Activated CD8-positive, alpha-beta T cell treated with anti-CD3 and anti-CD28 coated beads for 36 hours (primary cell): ENCODE measurements at regions of chr20 and their contacts with region 1.

Region 1: DNA sequence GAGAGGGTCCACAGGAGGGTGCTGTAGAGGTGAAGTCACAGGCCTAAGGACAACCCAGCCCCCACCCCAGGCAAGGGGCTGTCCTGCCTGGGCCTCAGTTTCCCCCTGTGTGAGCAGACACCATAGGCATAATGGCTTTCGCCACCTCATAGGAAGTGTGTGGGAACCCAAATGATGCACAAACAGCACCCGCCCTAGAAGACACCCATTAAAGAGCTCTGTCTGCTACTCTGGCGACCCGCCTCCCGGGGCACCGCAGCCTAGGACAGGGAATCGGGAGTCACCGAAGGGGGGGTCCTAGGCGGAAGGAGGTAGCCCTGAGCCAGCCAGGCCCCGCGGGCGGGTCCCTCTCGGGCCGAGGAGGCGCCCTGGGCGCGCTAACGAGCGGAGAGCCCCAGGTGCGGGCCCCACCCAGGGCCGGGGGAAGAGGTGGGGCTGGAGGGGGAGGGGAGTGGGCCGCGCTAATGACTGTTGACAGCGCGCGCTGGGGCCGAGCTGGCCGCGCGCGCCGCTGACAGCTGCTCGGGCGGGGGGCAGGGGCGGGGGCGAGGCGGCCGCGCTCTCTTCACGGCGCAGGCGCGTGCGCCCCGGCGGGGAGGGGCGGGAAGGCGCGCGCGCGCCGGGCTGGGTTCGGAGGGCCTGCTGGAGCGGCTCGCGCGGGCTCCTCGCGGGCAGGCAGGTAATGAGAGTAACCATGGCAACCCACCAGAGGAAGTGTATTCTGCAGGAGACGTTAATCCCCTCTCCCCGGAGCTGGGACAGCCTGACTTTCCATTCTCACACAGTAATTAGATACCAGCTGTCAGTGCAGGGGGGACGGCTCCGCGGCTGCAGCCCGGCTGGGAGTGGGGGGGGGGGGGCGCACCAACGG is 48.9 kb downstream of the NOL4L start:
- DNase-seq: peak; percentile 85
- ATAC-seq: peak; percentile 40
- H3K4me3 Mint-ChIP-seq: peak overlapping the region; percentile 67
- H3K27ac Mint-ChIP-seq: peak overlapping the region; percentile 90
- H3K4me1 Mint-ChIP-seq: peaks cover 81% of the 10 kb centered on the region
- H3K27me3 Mint-ChIP-seq: no peaks in the 10 kb centered on the region
- CTCF ChIP-seq: no peak

Region 2: DNA sequence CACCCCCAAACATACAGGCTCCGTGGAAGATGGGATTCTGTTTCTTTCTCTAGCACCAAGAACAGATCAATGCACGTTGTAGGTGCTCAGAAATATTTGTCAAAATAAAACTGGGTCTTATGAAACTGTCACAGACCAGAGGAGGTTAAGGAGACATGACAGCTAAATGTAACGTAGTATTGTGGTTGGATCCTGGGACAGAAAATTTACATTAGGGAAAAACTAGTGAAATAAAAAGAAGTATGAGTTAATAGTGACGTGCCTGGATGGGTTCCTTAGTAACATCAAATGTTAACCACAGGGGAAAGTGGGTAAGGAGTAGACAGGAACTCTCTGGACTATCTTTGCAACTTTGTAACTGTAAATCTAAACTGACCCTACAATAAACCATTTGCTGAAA is 17.4 kb after region 1 on chr20:
- CTCF ChIA-PET with region 1: interaction called, 3 read pairs
- POLR2A ChIA-PET with region 1: interaction called, 57 read pairs
- intact Hi-C with region 1: no loop called
- DNase-seq: no peak
- ATAC-seq: no peak
- H3K4me3 Mint-ChIP-seq: no peak overlapping the region
- H3K27ac Mint-ChIP-seq: peak overlapping the region; percentile 62
- H3K4me1 Mint-ChIP-seq: peaks cover 59% of the 10 kb centered on the region
- H3K27me3 Mint-ChIP-seq: no peaks in the 10 kb centered on the region
- CTCF ChIP-seq: no peak

Region 3: GRCh38 chr20:32560989-32561830 is 25.0 kb after region 1 on chr20:
- CTCF ChIA-PET with region 1: no interaction called
- POLR2A ChIA-PET with region 1: interaction called, 57 read pairs
- intact Hi-C with region 1: no loop called
- DNase-seq: peak; percentile 73
- ATAC-seq: peak; percentile 85
- H3K4me3 Mint-ChIP-seq: peak overlapping the region; percentile 54
- H3K27ac Mint-ChIP-seq: peak overlapping the region; percentile 78
- H3K4me1 Mint-ChIP-seq: peaks cover 48% of the 10 kb centered on the region
- H3K27me3 Mint-ChIP-seq: no peaks in the 10 kb centered on the region
- CTCF ChIP-seq: no peak

Region 4: GRCh38 chr20:32574296-32575226 is 38.4 kb after region 1 on chr20:
- CTCF ChIA-PET with region 1: interaction called, 3 read pairs
- POLR2A ChIA-PET with region 1: interaction called, 10 read pairs
- intact Hi-C with region 1: loop called (anchors 5 kb)
- DNase-seq: peak; percentile 65
- ATAC-seq: peak; percentile 68
- H3K4me3 Mint-ChIP-seq: no peak overlapping the region
- H3K27ac Mint-ChIP-seq: no peak overlapping the region
- H3K4me1 Mint-ChIP-seq: peaks cover 46% of the 10 kb centered on the region
- H3K27me3 Mint-ChIP-seq: no peaks in the 10 kb centered on the region
- CTCF ChIP-seq: no peak

Region 5: DNA sequence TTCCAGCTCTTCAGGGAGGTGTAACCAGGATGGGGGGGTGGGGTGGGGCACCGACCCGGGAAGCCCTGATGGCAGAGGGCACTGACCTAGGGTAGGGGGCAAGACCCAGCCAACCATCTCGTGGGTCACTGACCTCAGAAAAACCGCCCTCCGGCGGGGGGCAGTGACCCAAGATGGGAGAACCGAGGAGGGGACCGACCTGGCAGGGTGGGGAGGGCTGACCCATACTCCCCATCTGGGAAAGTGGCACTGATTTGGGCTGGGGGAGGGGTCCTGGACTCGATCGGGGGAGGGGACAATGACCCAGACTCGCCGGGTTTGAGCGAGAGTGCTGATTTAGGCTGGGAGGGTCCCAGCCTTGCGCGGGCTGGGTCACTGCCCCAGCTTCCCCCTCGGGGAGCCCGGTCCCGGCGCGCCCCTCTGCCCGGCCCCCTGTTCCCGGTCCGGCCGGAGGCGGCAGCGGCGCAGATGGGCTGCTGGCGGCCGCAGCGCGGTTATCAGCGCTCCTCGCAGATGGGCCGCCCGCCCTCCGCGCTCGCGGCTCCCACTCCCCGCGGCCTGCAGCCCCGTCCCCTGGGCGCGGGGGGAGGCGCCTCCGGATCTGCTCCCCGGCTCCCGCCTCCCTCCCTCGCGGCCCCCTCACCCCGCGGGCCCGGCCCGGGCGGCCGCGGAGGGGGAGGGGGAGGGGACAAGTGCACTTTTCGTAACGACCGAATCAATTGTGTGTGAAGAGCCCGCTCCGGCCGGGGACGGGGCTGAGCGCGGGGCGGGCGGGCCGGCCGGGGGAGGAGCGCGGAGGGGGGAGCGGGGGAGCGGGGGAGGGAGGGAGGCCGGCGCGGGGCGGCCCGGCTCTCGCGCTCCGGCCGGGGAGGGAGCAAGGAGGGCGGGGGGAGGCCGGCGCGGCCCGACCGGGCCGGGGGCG is 46.7 kb after region 1 on chr20:
- CTCF ChIA-PET with region 1: interaction called, 3 read pairs
- POLR2A ChIA-PET with region 1: interaction called, 11 read pairs
- intact Hi-C with region 1: loop called (anchors 5 kb)
- DNase-seq: peak; percentile 37
- ATAC-seq: no peak
- H3K4me3 Mint-ChIP-seq: peak overlapping the region; percentile 70
- H3K27ac Mint-ChIP-seq: no peak overlapping the region
- H3K4me1 Mint-ChIP-seq: peaks cover 48% of the 10 kb centered on the region
- H3K27me3 Mint-ChIP-seq: no peaks in the 10 kb centered on the region
- CTCF ChIP-seq: no peak

Region 6: GRCh38 chr20:32652739-32653526 is 116.7 kb after region 1 on chr20:
- CTCF ChIA-PET with region 1: interaction called, 24 read pairs
- POLR2A ChIA-PET with region 1: interaction called, 3 read pairs
- intact Hi-C with region 1: no loop called
- DNase-seq: peak; percentile 90
- ATAC-seq: peak; percentile 98
- H3K4me3 Mint-ChIP-seq: no peak overlapping the region
- H3K27ac Mint-ChIP-seq: no peak overlapping the region
- H3K4me1 Mint-ChIP-seq: peaks cover 7% of the 10 kb centered on the region
- H3K27me3 Mint-ChIP-seq: no peaks in the 10 kb centered on the region
- CTCF ChIP-seq: peak; percentile 95